ENCODE measurements at regions of chr14 and their contacts with region 1.

Region 1: DNA sequence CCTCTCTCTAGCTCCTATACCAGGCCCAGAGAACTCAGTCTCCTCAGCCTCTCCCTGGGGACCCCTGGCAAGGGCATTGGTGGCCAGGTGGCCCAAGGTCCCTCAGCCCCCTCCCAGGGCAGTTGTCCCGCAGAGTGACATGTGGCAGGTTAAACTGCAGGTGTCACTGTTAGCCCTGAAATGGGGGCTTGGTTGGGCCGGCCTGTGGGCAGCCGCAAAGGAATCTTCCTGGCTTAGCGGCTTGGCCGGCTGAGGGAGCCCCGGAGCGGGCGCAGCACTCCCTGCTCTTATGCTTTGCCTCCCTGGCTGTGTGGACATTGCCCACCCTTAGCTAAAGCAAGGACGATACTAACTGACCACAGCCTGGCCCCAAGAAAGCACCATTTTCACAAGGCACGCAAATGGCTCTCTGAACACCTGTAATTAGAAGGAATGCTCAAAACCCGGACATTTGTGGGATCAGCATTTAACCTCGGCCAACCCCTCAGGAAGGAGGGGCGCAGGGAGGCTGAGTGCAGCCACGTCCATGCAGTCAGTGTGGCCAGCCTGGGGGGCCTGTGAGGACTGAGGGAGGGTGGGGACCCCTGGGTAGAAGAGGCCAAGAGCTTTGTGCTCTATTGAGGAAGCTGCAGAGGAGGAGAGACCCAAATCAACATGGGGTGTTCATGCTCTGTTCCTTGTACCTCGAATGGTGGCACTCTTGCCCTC is 82.2 kb downstream of the PAPOLA start:
- DNase-seq: peak; percentile 63
- ATAC-seq: peak; percentile 79
- H3K4me3 Mint-ChIP-seq: no peak overlapping the region
- H3K27ac Mint-ChIP-seq: no peak overlapping the region
- H3K4me1 Mint-ChIP-seq: no peaks in the 10 kb centered on the region
- H3K27me3 Mint-ChIP-seq: peaks cover 12% of the 10 kb centered on the region

Region 2: GRCh38 chr14:96666088-96666487 is 81.7 kb after region 1 on chr14:
- CTCF ChIA-PET with region 1: interaction called, 3 read pairs
- POLR2A ChIA-PET with region 1: no interaction called
- intact Hi-C with region 1: loop called in 1 of 2 experiments (anchors 1 kb)
- DNase-seq: no peak
- ATAC-seq: no peak
- H3K4me3 Mint-ChIP-seq: no peak overlapping the region
- H3K27ac Mint-ChIP-seq: no peak overlapping the region
- H3K4me1 Mint-ChIP-seq: no peaks in the 10 kb centered on the region
- H3K27me3 Mint-ChIP-seq: peaks cover 22% of the 10 kb centered on the region

Measured in activated CD4-positive, alpha-beta T cell treated with anti-CD3 and anti-CD28 coated beads for 36 hours (primary cell).